ENCODE measurements at regions of chr10 and their contacts with region 1.

Region 1: GRCh38 chr10:68348265-68348741 is 15.6 kb upstream of the PBLD start:
- DNase-seq: no peak
- ATAC-seq: peak; percentile 62
- H3K4me3 ChIP-seq: no peak overlapping the region
- H3K27ac ChIP-seq: no peak overlapping the region
- H3K4me1 ChIP-seq: no peaks in the 10 kb centered on the region
- H3K27me3 ChIP-seq: no peaks in the 10 kb centered on the region

Region 2: GRCh38 chr10:68397005-68397404 is 48.7 kb after region 1 on chr10:
- intact Hi-C with region 1: loop called in 1 of 2 experiments (anchors 10 kb)
- DNase-seq: no peak
- ATAC-seq: no peak
- H3K4me3 ChIP-seq: no peak overlapping the region
- H3K27ac ChIP-seq: no peak overlapping the region
- H3K4me1 ChIP-seq: no peaks in the 10 kb centered on the region
- H3K27me3 ChIP-seq: no peaks in the 10 kb centered on the region

Region 3: GRCh38 chr10:68526626-68527307 is 178.5 kb after region 1 on chr10:
- intact Hi-C with region 1: no loop called
- DNase-seq: no peak
- ATAC-seq: no peak
- H3K4me3 ChIP-seq: peak overlapping the region; percentile 57 to 64
- H3K27ac ChIP-seq: peak overlapping the region; percentile 3 to 76
- H3K4me1 ChIP-seq: no peaks in the 10 kb centered on the region
- H3K27me3 ChIP-seq: no peaks in the 10 kb centered on the region

Measured in aorta (tissue), 5 donors.